ENCODE measurements at regions of chr12 and their contacts with region 1.

Region 1: GRCh38 chr12:33581613-33582122 is 142.0 kb upstream of the SYT10 start:
- DNase-seq: no peak
- H3K4me3 ChIP-seq: no peak overlapping the region
- H3K27ac ChIP-seq: no peak overlapping the region
- H3K4me1 ChIP-seq: peaks cover 3% of the 10 kb centered on the region
- H3K27me3 ChIP-seq: no peaks in the 10 kb centered on the region
- CTCF ChIP-seq: no peak

Region 2: DNA sequence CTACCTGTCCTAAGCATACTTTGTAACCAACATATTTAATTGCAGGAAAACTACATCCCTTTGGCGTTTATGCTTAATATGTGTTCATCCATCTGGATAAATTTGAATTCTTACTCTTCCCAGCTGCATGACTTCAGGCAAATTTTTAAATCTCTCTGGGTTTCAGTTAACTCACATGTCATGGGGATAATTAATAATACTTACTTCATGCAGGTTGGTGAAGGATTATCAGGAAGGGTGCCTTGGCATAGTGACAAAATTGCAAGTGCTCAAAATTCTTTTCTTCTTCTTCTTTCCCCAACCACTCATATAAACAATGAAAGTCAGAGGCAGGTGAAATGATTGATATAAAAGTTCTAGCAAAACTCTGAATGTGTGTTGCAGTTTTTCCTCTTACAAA is 158.0 kb before region 1 on chr12:
- CTCF ChIA-PET with region 1: no interaction called
- dilution Hi-C with region 1: no loop called
- in situ Hi-C with region 1: no loop called
- intact Hi-C with region 1: no loop called
- DNase-seq: no peak
- H3K4me3 ChIP-seq: no peak overlapping the region
- H3K27ac ChIP-seq: no peak overlapping the region
- H3K4me1 ChIP-seq: no peaks in the 10 kb centered on the region
- H3K27me3 ChIP-seq: peaks cover 2% of the 10 kb centered on the region
- CTCF ChIP-seq: no peak

Region 3: DNA sequence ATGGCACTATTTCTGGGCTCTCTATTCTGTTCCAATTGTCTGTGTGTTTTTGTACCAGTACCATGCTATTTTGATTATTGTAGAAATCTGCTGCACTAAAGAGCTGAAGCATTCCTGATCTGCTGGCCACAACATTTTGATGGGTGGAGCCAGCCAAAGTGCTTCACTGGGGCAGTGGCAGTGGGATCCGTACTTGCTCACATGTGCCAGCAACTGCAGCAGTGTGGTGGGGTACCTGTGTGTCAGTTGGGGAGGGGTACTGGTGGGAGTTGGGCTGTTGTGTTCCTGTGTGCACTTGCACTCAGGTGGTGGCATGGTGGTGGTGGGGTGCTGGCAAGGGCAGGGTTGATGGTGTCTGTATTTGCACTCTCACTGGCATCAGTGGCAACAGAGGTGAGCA is 236.0 kb after region 1 on chr12:
- CTCF ChIA-PET with region 1: interaction called, 11 read pairs
- dilution Hi-C with region 1: no loop called
- in situ Hi-C with region 1: no loop called
- intact Hi-C with region 1: no loop called
- DNase-seq: no peak
- H3K4me3 ChIP-seq: no peak overlapping the region
- H3K27ac ChIP-seq: no peak overlapping the region
- H3K4me1 ChIP-seq: no peaks in the 10 kb centered on the region
- H3K27me3 ChIP-seq: no peaks in the 10 kb centered on the region
- CTCF ChIP-seq: no peak